Transverse colon (tissue), 4 donors: ENCODE measurements at regions of chr7 and their contacts with region 1.

Region 1: GRCh38 chr7:67518580-67518979 is 521.9 kb downstream of the TYW1 start:
- DNase-seq: no peak
- H3K4me3 ChIP-seq: no peak overlapping the region
- H3K27ac ChIP-seq: no peak overlapping the region
- H3K4me1 ChIP-seq: no peaks in the 10 kb centered on the region
- H3K27me3 ChIP-seq: no peaks in the 10 kb centered on the region
- CTCF ChIP-seq: no peak
- EP300 ChIP-seq: no peak
- POLR2A ChIP-seq: no peak

Region 2: GRCh38 chr7:67462781-67463191 is 55.8 kb before region 1 on chr7:
- in situ Hi-C with region 1: no loop called
- intact Hi-C with region 1: no loop called
- DNase-seq: peak; percentile 34
- H3K4me3 ChIP-seq: no peak overlapping the region
- H3K27ac ChIP-seq: peak overlapping the region in 2 of 4 donors; percentile 37 to 74
- H3K4me1 ChIP-seq: peaks cover 3 to 14% (median 9%) of the 10 kb centered on the region in 4 donors
- H3K27me3 ChIP-seq: no peaks in the 10 kb centered on the region
- CTCF ChIP-seq: no peak
- EP300 ChIP-seq: peak; percentile 18
- POLR2A ChIP-seq: no peak

Region 3: GRCh38 chr7:67475294-67475800 is 43.2 kb before region 1 on chr7:
- in situ Hi-C with region 1: no loop called
- intact Hi-C with region 1: loop called (anchors 1 kb)
- DNase-seq: no peak
- H3K4me3 ChIP-seq: no peak overlapping the region
- H3K27ac ChIP-seq: no peak overlapping the region
- H3K4me1 ChIP-seq: no peaks in the 10 kb centered on the region
- H3K27me3 ChIP-seq: no peaks in the 10 kb centered on the region
- CTCF ChIP-seq: no peak
- EP300 ChIP-seq: no peak
- POLR2A ChIP-seq: no peak

Region 4: DNA sequence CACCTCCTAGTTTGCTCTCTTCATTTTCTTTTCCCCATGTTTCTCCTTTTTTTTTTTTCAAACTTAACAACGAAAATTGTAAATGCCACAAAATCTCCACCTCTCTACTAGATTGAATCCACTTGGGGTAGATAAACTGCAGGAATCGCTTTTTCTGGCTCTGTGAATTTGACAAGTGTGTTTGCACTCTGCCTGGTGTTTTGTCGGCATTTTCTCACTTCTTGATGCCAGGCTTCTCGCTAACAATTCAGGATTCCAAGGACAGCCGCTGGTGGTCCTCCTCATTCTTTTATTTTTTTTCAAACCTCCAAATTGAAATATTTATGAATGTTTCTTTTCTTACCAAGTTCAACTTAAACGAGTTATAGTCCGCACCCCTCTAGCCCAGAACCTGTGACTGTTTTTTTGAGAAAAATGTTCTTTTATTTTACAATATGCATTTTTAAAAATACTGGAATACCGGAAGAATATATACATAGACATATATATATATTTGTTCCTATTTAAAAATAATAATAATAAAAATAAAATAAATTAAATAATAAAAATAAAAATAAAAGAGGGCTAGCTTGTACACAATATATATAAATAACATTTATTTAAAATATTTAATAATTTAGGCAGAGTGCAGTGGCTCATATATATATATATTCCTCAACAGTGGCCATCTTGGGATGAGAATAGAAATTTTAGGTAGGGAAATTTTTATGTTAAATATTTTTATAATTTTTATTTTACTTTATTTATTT is 16.8 kb after region 1 on chr7:
- in situ Hi-C with region 1: no loop called
- intact Hi-C with region 1: no loop called
- DNase-seq: no peak
- H3K4me3 ChIP-seq: no peak overlapping the region
- H3K27ac ChIP-seq: no peak overlapping the region
- H3K4me1 ChIP-seq: no peaks in the 10 kb centered on the region
- H3K27me3 ChIP-seq: no peaks in the 10 kb centered on the region
- CTCF ChIP-seq: no peak
- EP300 ChIP-seq: no peak
- POLR2A ChIP-seq: no peak

Region 5: GRCh38 chr7:68216051-68216450 is 697.5 kb after region 1 on chr7:
- in situ Hi-C with region 1: no loop called
- intact Hi-C with region 1: no loop called
- DNase-seq: no peak
- H3K4me3 ChIP-seq: no peak overlapping the region
- H3K27ac ChIP-seq: no peak overlapping the region
- H3K4me1 ChIP-seq: no peaks in the 10 kb centered on the region
- H3K27me3 ChIP-seq: no peaks in the 10 kb centered on the region
- CTCF ChIP-seq: no peak
- EP300 ChIP-seq: no peak
- POLR2A ChIP-seq: no peak